ENCODE measurements at regions of chr11 and their contacts with region 1.

Region 1: GRCh38 chr11:102287964-102288724 is 29.1 kb upstream of the BIRC3 start:
- DNase-seq: peak in 1 of 2 donors; percentile 86
- ATAC-seq: peak; percentile 83 to 91 (median 87)
- H3K4me3 ChIP-seq: no peak overlapping the region
- H3K4me3 Mint-ChIP-seq: no peak overlapping the region
- H3K27ac ChIP-seq: no peak overlapping the region
- H3K27ac Mint-ChIP-seq: no peak overlapping the region
- H3K4me1 ChIP-seq: peaks cover 5% of the 10 kb centered on the region
- H3K4me1 Mint-ChIP-seq: no peaks in the 10 kb centered on the region
- H3K27me3 ChIP-seq: no peaks in the 10 kb centered on the region
- H3K27me3 Mint-ChIP-seq: no peaks in the 10 kb centered on the region
- CTCF ChIP-seq: peak; percentile 84

Region 2: DNA sequence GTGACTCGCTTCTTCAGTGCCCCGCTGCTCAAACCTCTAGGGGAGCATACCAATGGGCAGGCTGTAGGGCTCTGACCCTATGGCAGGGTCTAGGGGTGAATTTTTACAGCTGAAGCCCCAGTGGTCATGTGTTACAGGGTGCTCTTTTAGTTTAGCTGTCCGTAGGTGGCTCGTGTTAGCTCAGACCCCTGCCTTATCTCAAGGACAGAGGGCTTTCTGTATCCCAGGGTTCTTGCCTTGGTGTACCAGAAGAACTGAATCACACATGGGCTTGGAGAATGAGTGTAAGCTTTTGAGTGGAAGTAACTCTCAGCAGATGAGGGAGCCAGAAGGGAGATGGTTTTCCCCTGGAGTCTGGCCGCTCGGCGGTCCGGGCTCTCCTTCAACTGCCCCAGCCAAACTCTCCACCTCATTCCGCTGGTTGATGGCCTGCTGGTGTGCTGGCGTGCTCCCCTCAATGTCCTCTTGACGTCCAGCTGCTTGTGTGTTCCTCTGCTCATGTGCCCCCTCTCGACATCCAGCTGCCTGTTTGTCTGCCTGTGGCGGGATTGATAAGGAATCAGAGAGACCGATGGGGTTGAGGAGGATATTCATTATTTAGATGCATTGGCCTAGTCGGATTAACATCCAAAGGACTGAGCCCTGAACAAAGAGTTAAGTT is 96.4 kb after region 1 on chr11:
- intact Hi-C with region 1: no loop called
- DNase-seq: no peak
- ATAC-seq: no peak
- H3K4me3 ChIP-seq: no peak overlapping the region
- H3K4me3 Mint-ChIP-seq: no peak overlapping the region
- H3K27ac ChIP-seq: no peak overlapping the region
- H3K27ac Mint-ChIP-seq: peak overlapping the region; percentile 24 to 27
- H3K4me1 ChIP-seq: no peaks in the 10 kb centered on the region
- H3K4me1 Mint-ChIP-seq: no peaks in the 10 kb centered on the region
- H3K27me3 ChIP-seq: no peaks in the 10 kb centered on the region
- H3K27me3 Mint-ChIP-seq: no peaks in the 10 kb centered on the region
- CTCF ChIP-seq: no peak

Region 3: GRCh38 chr11:102614485-102614884 is 326.3 kb after region 1 on chr11:
- intact Hi-C with region 1: loop called (anchors 1 kb)
- DNase-seq: peak in 1 of 2 donors; percentile 6
- ATAC-seq: no peak
- H3K4me3 ChIP-seq: no peak overlapping the region
- H3K4me3 Mint-ChIP-seq: no peak overlapping the region
- H3K27ac ChIP-seq: no peak overlapping the region
- H3K27ac Mint-ChIP-seq: no peak overlapping the region
- H3K4me1 ChIP-seq: no peaks in the 10 kb centered on the region
- H3K4me1 Mint-ChIP-seq: no peaks in the 10 kb centered on the region
- H3K27me3 ChIP-seq: no peaks in the 10 kb centered on the region
- H3K27me3 Mint-ChIP-seq: peaks cover 0 to 3% of the 10 kb centered on the region in 2 donors
- CTCF ChIP-seq: no peak

Region 4: DNA sequence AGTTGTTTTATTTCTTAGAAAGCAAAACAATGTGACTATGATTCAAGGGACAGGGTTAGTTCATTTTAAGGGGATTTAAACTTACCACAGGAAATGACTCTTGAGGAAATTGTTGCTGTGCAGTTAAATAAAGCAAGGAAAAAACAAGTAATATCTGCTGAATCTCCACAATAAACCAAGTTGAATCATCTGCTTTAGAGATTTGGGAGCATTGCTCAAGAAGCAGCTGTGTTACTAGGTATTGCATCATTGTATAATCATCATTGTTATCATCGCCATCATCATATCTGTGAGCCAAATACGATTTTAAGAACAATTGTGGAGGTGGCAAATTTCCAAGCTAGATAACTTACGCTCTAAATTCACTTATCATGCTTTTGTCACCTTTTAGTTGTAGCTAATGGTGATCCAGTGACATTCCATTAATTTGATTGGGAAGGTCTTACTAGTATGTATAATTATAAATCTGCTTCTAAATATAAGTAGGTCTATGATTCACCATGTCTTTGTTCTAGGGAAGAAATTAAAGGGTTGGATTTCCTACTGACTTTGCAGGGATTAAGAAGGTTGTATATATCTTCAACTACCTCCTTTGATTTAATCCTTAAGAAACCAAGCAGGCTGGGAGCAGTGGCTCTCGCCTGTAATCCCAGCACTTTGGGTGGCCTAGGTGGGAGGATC is 472.4 kb after region 1 on chr11:
- intact Hi-C with region 1: no loop called
- DNase-seq: no peak
- ATAC-seq: peak in 1 of 3 donors; percentile 44
- H3K4me3 ChIP-seq: no peak overlapping the region
- H3K4me3 Mint-ChIP-seq: no peak overlapping the region
- H3K27ac ChIP-seq: no peak overlapping the region
- H3K27ac Mint-ChIP-seq: no peak overlapping the region
- H3K4me1 ChIP-seq: no peaks in the 10 kb centered on the region
- H3K4me1 Mint-ChIP-seq: no peaks in the 10 kb centered on the region
- H3K27me3 ChIP-seq: no peaks in the 10 kb centered on the region
- H3K27me3 Mint-ChIP-seq: peaks cover 5 to 10% of the 10 kb centered on the region in 2 donors
- CTCF ChIP-seq: no peak